Caco-2 (cell line): ENCODE measurements at regions of chr3 and their contacts with region 1.

Region 1: GRCh38 chr3:72938471-72939265 is 50.8 kb downstream of the GXYLT2 start:
- DNase-seq: peak; percentile 85 to 86
- H3K4me3 ChIP-seq: no peak overlapping the region
- H3K4me3 Mint-ChIP-seq: peak overlapping the region; percentile 55
- H3K27ac Mint-ChIP-seq: peak overlapping the region; percentile 77
- H3K4me1 ChIP-seq: peaks cover 12% of the 10 kb centered on the region
- H3K4me1 Mint-ChIP-seq: peaks cover 16% of the 10 kb centered on the region
- H3K27me3 ChIP-seq: no peaks in the 10 kb centered on the region
- H3K27me3 Mint-ChIP-seq: no peaks in the 10 kb centered on the region
- CTCF ChIP-seq: peak; percentile 41 to 74

Region 2: DNA sequence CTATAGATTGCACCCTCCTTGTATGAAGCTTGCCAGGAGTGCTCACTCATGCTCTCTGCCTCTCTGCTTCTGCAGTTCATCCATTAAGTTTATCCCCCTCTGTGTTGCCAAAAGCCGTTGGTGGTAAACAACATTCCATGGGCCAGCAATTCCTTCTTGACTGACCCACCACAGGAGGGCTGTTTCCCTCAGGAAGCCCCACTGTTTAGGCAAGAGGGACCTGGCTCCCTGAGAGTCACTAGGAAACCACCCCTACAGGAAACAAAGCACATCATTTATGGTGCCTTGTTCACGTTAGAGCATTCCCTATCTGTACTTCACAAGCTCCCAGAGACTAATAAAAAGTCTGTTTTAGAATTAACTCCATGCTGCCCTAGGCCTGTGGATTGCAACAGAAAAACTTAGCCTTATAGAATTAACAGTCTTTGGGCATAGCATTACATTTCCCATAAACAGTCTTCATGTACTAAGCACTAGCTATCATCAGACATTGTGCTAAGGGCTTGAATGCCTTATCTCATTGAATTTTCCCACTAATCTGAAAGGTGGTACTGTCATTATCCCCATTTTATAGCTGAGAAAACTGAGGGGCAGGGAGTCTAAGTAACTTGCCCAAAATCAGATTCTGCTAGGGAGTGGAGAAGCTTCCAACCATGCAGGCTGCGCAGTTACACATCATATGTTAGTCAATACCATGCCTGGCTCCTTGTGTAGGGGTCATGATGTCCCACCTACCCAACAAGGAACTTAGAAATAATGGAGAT is 240.3 kb before region 1 on chr3:
- CTCF ChIA-PET with region 1: no interaction called
- POLR2A ChIA-PET with region 1: no interaction called
- intact Hi-C with region 1: no loop called
- DNase-seq: no peak
- H3K4me3 ChIP-seq: no peak overlapping the region
- H3K4me3 Mint-ChIP-seq: no peak overlapping the region
- H3K27ac Mint-ChIP-seq: no peak overlapping the region
- H3K4me1 ChIP-seq: no peaks in the 10 kb centered on the region
- H3K4me1 Mint-ChIP-seq: no peaks in the 10 kb centered on the region
- H3K27me3 ChIP-seq: no peaks in the 10 kb centered on the region
- H3K27me3 Mint-ChIP-seq: no peaks in the 10 kb centered on the region
- CTCF ChIP-seq: no peak

Region 3: GRCh38 chr3:72847751-72848702 is 90.6 kb before region 1 on chr3 and contains the start of gene SHQ1:
- CTCF ChIA-PET with region 1: no interaction called
- POLR2A ChIA-PET with region 1: no interaction called
- intact Hi-C with region 1: loop called (anchors 2 kb)
- DNase-seq: peak; percentile 92 to 93
- H3K4me3 ChIP-seq: peak within 1 kb of the TSS; percentile 87
- H3K4me3 Mint-ChIP-seq: peak within 1 kb of the TSS; percentile 93
- H3K27ac Mint-ChIP-seq: peak within 1 kb of the TSS; percentile 92
- H3K4me1 ChIP-seq: 0 out of 2 replicates have a peak, but pooled peaks cover 10% of the 10 kb centered on the region
- H3K4me1 Mint-ChIP-seq: peaks cover 8% of the 10 kb centered on the region
- H3K27me3 ChIP-seq: no peaks in the 10 kb centered on the region
- H3K27me3 Mint-ChIP-seq: no peaks in the 10 kb centered on the region
- CTCF ChIP-seq: no peak
- total RNA-seq, gene SHQ1: 18.8 and 20.2 TPM in 2 replicates

Region 4: GRCh38 chr3:72973031-72973723 is 34.5 kb after region 1 on chr3:
- CTCF ChIA-PET with region 1: interaction called, 4 read pairs
- POLR2A ChIA-PET with region 1: no interaction called
- intact Hi-C with region 1: loop called (anchors 1 kb)
- DNase-seq: peak; percentile 90 to 96
- H3K4me3 ChIP-seq: peak overlapping the region; percentile 14; the same call in 1 of the 2 replicates
- H3K4me3 Mint-ChIP-seq: peak overlapping the region; percentile 68
- H3K27ac Mint-ChIP-seq: peak overlapping the region; percentile 88
- H3K4me1 ChIP-seq: peaks cover 37% of the 10 kb centered on the region
- H3K4me1 Mint-ChIP-seq: peaks cover 20% of the 10 kb centered on the region
- H3K27me3 ChIP-seq: no peaks in the 10 kb centered on the region
- H3K27me3 Mint-ChIP-seq: no peaks in the 10 kb centered on the region
- CTCF ChIP-seq: no peak

Region 5: DNA sequence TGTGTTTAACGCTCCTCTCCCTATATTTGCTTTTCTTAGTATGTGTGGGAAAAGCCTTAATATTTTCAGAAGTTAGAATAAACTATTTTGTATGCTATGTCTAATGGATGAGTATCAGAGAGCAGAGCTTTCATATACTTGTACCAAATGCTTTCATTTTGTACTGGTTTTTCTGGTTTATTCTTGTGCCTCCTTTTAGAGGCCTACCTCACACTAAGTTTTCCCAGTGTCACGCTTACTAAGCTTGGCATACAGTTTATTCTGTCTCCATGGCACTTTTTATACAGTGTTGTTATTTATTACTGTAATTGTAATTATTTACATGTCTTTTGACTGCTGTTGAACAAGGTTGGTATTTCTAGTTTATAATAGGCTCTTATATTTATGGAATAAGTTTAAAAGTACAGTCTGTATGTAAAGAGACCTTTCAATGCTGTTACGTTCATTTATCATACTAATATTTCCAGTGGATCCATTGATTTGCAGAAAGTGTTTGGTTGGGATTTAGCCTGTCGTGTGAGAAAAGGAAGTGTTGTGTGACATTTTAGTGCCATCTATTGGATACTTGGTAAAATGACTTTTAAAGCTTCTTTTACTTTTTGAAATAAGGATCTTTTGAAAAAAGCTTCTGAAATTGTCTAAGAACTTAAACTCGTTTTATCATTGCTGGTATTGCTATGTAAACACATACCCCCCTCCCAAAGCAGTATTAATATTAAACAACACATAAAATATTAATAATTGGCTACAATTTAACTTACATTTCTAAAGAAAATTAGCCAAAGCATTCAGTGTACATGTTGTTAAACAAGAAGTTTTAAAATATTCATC is 117.6 kb after region 1 on chr3:
- CTCF ChIA-PET with region 1: interaction called, 10 read pairs
- POLR2A ChIA-PET with region 1: no interaction called
- intact Hi-C with region 1: loop called (anchors 1 kb)
- DNase-seq: no peak
- H3K4me3 ChIP-seq: no peak overlapping the region
- H3K4me3 Mint-ChIP-seq: no peak overlapping the region
- H3K27ac Mint-ChIP-seq: no peak overlapping the region
- H3K4me1 ChIP-seq: peaks cover 20% of the 10 kb centered on the region
- H3K4me1 Mint-ChIP-seq: peaks cover 21% of the 10 kb centered on the region
- H3K27me3 ChIP-seq: no peaks in the 10 kb centered on the region
- H3K27me3 Mint-ChIP-seq: no peaks in the 10 kb centered on the region
- CTCF ChIP-seq: peak; percentile 30 to 48